GM10248 (cell line): ENCODE measurements at regions of chr16 and their contacts with region 1.

Region 1: GRCh38 chr16:28950648-28951409 is at the start of gene NFATC2IP:
- DNase-seq: peak; percentile 99
- CTCF ChIP-seq: no peak

Region 2: GRCh38 chr16:28823872-28824716 is 126.7 kb before region 1 on chr16:
- CTCF ChIA-PET with region 1: interaction called, 24 read pairs
- POLR2A ChIA-PET with region 1: interaction called, 5 read pairs
- DNase-seq: peak; percentile 95
- CTCF ChIP-seq: no peak

Region 3: DNA sequence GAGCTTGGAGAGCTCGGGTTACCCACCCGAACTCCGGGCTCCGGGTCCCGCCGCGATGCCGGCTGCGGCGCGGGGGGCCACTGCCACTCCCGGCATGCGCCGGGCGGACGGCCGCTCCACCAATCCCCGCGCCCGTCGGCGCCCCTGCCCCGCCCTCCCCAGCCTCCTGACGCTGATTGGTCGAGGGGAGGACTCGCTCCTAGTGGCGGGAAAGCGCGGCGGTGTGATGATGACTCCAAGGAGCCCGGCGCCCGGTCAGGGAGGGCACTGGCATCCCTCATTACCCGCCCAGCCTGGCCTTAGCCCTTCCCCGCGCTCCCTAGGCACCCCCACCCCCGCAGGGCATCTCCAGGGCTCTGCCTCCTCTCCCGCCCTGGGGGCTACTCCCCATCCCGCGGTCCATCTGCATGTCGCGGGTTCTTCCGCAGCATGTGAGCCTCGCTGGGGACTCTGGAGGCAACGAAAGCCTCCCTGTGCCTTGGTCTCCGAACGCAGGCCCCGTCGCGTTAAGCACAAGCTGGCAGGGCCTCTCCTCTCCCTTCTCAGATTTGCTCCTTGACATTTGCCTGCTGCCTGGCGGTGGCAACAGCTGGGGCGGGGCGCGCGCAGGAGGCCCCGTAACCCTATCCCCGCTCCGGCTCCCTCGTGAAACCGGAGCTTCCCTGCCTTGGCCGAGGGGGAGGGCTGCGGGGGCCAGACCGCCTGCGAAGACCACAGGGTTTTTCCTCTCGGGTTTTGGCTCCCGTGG is 70.8 kb before region 1 on chr16:
- CTCF ChIA-PET with region 1: interaction called, 65 read pairs
- POLR2A ChIA-PET with region 1: no interaction called
- DNase-seq: peak; percentile 98
- CTCF ChIP-seq: no peak